ENCODE measurements at regions of chr2 and their contacts with region 1.

Region 1: GRCh38 chr2:47767880-47768609 is 14.9 kb upstream of the MSH6 start:
- DNase-seq: peak; percentile 95
- H3K4me3 ChIP-seq: peak overlapping the region in 1 of 8 donors; percentile 30
- H3K27ac ChIP-seq: no peak overlapping the region
- H3K4me1 ChIP-seq: peaks cover 0 to 9% (median 7%) of the 10 kb centered on the region in 6 donors
- H3K27me3 ChIP-seq: peaks cover 0 to 2% (median 0%) of the 10 kb centered on the region in 7 donors
- CTCF ChIP-seq: peak; percentile 92 to 100 (median 99)
- POLR2A ChIP-seq: no peak

Region 2: DNA sequence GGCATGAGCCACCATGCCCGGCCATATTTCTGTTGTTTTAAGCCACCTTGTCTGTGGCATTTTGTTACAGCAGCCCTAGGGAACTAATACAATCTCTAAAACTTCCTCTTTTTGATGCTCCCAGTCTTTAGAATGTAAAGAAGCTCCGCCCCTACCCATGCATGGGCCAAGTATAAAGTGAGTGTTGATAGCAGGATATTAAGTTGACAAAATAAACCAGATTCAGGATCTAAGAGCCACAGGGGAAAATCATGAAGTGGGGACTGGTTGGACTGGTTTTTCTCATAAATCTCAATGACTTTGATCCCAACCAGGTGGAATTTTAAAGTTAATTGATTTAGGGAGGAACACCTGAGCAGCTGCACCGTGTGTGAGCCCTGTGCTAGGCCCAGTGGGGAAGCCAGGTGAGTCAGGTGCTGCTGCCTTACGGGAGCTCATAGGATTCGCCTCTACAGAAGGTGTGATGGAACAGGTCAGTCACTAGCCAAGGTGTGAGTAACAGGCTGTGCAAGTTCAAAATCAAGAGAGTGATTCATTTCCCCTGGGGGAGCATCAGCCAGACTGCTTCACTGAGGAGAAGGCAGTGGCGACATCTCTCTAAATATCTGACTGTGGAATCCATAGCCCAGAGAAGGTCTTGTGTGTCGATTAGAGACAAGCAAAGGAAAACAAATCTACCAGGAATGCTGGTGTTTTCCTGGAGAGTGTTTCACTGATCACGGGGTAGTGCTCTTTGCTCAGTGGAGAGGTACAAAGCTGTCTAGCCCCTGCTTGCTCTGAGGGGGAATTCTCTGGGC is 428.1 kb before region 1 on chr2:
- intact Hi-C with region 1: loop called (anchors 5 kb)
- DNase-seq: no peak
- H3K4me3 ChIP-seq: no peak overlapping the region
- H3K27ac ChIP-seq: no peak overlapping the region
- H3K4me1 ChIP-seq: peaks cover 6 to 36% (median 17%) of the 10 kb centered on the region in 6 donors
- H3K27me3 ChIP-seq: peaks cover 0 to 8% (median 0%) of the 10 kb centered on the region in 7 donors
- CTCF ChIP-seq: no peak
- POLR2A ChIP-seq: no peak

Region 3: DNA sequence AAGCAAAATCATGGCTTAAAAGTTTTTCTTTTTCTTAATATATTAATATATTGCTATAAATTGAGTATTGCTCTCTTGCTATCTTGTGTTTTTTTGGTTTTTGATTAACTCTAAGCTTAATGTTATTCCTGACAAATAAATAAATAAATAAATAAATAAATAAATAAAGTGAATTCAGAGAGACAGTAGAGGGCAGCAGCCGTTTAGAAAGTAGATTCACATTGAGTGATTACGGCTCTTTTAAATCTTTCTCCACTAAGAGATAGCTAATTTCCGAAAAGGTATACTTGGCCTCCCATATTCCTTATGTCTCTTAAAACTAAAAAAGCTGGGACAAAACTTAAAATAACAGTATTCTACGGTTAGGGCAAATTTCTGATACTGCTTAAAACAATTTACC is 330.8 kb before region 1 on chr2:
- intact Hi-C with region 1: loop called (anchors 5 kb)
- DNase-seq: no peak
- H3K4me3 ChIP-seq: no peak overlapping the region
- H3K27ac ChIP-seq: no peak overlapping the region
- H3K4me1 ChIP-seq: no peaks in the 10 kb centered on the region
- H3K27me3 ChIP-seq: no peaks in the 10 kb centered on the region
- CTCF ChIP-seq: peak in 5 of 11 experiments; percentile 17 to 48 (median 28)
- POLR2A ChIP-seq: no peak

Region 4: DNA sequence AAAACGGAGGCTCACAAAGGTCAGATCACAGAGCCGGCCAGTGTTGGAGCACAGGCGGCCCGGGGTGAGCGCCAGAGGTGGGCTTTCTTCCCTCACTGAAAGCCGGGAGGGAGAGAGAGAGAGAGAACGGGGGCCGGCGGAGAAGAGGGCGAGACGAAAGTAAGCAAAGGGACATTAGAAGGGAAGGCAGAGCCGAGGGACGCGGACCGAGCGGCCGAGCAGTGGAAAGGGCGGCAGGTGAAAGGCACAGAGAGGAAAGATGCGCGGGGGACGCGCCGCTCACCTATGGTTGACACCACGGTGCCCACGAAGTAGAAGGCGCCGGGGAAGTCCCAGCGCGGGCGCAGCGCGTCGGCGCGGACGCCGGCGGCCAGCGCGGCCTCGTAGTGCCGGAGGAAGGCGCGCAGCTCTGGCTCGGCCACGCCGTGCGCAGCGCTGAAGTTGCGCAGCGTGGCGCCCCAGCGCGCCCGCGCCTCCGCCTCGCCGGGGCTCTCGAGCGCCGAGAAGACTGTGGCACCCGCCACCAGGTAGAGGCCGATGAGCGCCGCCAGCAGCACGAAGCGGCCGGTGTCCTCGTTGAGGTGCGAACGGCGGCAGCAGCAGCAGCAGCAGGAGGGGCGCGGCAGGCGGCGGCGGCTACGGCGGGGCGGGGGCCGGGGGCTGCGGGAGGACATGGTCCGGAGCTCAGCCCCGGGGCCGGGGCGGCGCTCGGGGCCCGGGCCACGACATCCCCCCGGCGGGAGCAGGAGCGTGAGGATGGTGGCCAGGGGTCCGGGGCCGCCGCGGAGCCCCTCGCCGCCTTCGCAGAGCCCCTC is 198.2 kb before region 1 on chr2:
- intact Hi-C with region 1: no loop called
- DNase-seq: no peak
- H3K4me3 ChIP-seq: peak overlapping the region in 6 of 8 donors; percentile 11 to 65 (median 28)
- H3K27ac ChIP-seq: no peak overlapping the region
- H3K4me1 ChIP-seq: peaks cover 11 to 30% (median 26%) of the 10 kb centered on the region in 6 donors
- H3K27me3 ChIP-seq: peaks cover 0 to 74% (median 60%) of the 10 kb centered on the region in 7 donors
- CTCF ChIP-seq: no peak
- POLR2A ChIP-seq: no peak

Measured in spleen (tissue), 13 donors.